ENCODE measurements at regions of chr9 and their contacts with region 1.

Region 1: GRCh38 chr9:72271613-72272478 is 93.2 kb downstream of the ZFAND5 start:
- DNase-seq: peak; percentile 54 to 80
- H3K4me3 ChIP-seq: no peak overlapping the region
- H3K4me1 ChIP-seq: no peaks in the 10 kb centered on the region
- H3K27me3 ChIP-seq: no peaks in the 10 kb centered on the region

Region 2: GRCh38 chr9:71806901-71807307 is 464.9 kb before region 1 on chr9:
- in situ Hi-C with region 1: loop called (anchors 25 kb)
- DNase-seq: peak; percentile 80 to 89
- H3K4me3 ChIP-seq: no peak overlapping the region
- H3K4me1 ChIP-seq: peaks cover 7% of the 10 kb centered on the region
- H3K27me3 ChIP-seq: no peaks in the 10 kb centered on the region

Region 3: DNA sequence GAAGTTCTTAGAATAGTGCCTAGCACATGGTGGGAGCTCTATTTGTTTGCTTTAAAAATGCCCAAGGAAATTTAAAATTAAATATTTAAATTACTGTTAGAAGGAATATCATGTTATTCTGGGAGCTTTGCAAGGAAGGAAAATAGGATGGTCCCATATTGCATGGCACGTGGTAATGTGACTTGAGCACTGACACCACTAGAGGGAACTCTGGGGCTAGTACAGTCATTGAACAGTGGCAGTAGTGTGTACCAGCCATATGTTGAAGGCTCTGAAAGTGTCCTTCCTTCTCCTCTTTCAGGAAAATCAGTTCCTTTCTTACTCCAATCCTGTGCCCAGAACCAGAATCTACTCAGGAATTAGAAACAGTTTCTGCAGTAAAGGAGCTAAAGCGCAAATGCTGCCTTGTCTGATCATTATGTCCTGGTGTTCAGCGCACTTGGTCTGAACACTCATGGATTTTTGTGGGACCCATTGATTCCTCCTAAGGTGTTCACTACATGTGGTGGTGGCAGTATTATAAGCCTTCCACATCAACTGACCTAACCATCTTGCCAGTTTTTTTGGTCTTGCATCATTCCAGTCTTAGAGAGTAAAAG is 68.5 kb before region 1 on chr9:
- in situ Hi-C with region 1: loop called (anchors 10 kb)
- DNase-seq: peak; percentile 70 to 72
- H3K4me3 ChIP-seq: no peak overlapping the region
- H3K4me1 ChIP-seq: no peaks in the 10 kb centered on the region
- H3K27me3 ChIP-seq: 0 out of 2 replicates have a peak, but pooled peaks cover 2% of the 10 kb centered on the region